Activated CD4-positive, alpha-beta T cell treated with anti-CD3 and anti-CD28 coated beads for 36 hours (primary cell): ENCODE measurements at regions of chr9 and their contacts with region 1.

Region 1: GRCh38 chr9:109063760-109064159 is 50.5 kb upstream of the CTNNAL1 start:
- DNase-seq: no peak
- ATAC-seq: no peak
- H3K4me3 Mint-ChIP-seq: no peak overlapping the region
- H3K27ac Mint-ChIP-seq: peak overlapping the region; percentile 2
- H3K4me1 Mint-ChIP-seq: peaks cover 2% of the 10 kb centered on the region
- H3K27me3 Mint-ChIP-seq: no peaks in the 10 kb centered on the region

Region 2: DNA sequence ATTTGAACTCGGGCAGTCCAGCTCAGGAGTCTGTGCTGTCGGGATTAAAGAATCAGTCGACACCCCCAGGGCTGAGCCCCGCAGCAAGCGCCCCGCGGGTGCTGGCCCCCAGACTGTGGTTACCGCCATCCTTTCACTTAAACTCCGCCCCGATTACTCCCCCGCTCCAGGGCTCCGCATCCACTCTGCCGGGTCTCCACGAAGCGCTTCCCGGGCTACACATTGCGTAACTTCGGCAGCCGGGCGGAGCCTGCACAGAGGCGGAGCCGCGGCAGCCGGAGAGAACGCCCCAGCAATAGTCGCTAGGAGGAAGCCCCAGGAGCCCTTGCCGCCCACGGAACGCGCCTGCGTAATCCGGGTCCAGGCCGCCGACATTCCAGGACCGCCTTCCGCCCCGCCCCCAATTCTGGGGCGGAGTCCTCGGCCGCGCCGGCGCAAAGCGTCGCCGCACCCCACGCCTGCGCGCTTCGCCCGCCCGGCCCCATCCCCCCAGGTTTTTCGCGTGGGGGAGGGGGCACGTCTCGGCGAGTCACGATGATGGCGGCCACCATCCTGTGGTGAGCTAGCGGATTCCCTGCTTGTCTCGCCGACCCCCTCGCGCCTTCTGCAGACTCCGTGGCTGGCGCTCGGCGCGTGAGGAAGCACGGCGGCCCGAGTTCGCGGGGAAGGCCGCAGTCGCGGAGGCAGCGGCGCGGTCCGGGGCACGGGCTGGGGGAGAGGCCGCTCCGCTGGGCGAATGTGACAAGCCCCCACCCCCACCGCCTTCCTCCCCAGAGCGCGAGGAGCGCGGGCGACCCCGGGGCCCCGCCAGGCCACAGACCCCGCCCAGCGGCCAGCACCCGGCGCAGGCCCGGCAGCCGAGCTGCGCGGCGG is 1780.8 kb before region 1 on chr9 and contains the start of gene RAD23B:
- CTCF ChIA-PET with region 1: no interaction called
- POLR2A ChIA-PET with region 1: no interaction called
- intact Hi-C with region 1: no loop called
- DNase-seq: peak; percentile 99
- ATAC-seq: peak; percentile 85
- H3K4me3 Mint-ChIP-seq: peak within 1 kb of the TSS; percentile 83
- H3K27ac Mint-ChIP-seq: peak within 1 kb of the TSS; percentile 89
- H3K4me1 Mint-ChIP-seq: peaks cover 37% of the 10 kb centered on the region
- H3K27me3 Mint-ChIP-seq: no peaks in the 10 kb centered on the region
- total RNA-seq, gene RAD23B: 114 to 188 TPM

Region 3: GRCh38 chr9:108599571-108599970 is 464.2 kb before region 1 on chr9:
- CTCF ChIA-PET with region 1: no interaction called
- POLR2A ChIA-PET with region 1: interaction called, 10 read pairs
- intact Hi-C with region 1: no loop called
- DNase-seq: no peak
- ATAC-seq: no peak
- H3K4me3 Mint-ChIP-seq: no peak overlapping the region
- H3K27ac Mint-ChIP-seq: no peak overlapping the region
- H3K4me1 Mint-ChIP-seq: no peaks in the 10 kb centered on the region
- H3K27me3 Mint-ChIP-seq: no peaks in the 10 kb centered on the region